ENCODE measurements at regions of chr1 and their contacts with region 1.

Region 1: GRCh38 chr1:109532365-109533136 is 7.1 kb upstream of the GPR61 start:
- DNase-seq: peak; percentile 80 to 86 (median 81)
- ATAC-seq: peak; percentile 84 to 94 (median 92)
- H3K4me3 ChIP-seq: no peak overlapping the region
- H3K27ac ChIP-seq: no peak overlapping the region
- H3K4me1 ChIP-seq: peaks cover 0 to 8% (median 0%) of the 10 kb centered on the region in 4 donors
- H3K27me3 ChIP-seq: no peaks in the 10 kb centered on the region
- CTCF ChIP-seq: peak; percentile 86 to 97 (median 90)
- POLR2A ChIP-seq: no peak

Region 2: DNA sequence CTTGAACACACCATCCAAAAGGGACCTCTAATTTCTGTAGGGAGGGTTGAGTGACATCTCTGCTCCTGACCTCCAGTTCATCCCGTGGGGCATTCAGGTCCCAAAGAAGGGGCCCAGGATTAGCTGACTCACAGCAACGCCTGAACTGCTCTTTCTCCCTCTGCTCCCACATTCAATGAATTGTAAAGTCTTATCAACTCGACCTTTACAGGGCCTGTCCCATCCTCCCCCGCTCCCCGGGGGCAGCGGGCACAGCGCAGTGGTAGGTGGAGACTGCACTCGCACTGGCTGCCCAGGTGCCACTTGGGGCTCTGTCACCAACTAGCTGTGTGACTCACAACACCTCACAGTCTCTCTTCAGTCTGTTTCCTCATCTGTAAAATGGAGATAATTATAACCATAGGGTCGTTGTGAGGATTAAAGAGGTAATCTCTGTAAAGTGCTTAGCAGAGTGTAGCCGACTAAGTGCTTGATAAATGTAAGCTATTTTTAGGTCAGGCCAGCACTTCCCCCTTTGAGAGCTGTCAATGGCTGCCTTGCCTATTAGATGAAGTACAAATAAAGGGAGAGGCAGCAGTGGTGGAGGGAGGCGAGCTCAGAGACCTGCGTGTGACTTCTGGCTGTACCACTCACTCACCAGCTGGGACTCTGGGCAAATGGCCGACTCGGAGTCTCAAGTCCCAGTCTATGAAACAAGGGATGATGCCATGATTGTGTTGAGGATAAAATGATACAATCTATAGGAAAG is 225.1 kb before region 1 on chr1:
- intact Hi-C with region 1: no loop called
- DNase-seq: no peak
- ATAC-seq: no peak
- H3K4me3 ChIP-seq: no peak overlapping the region
- H3K27ac ChIP-seq: no peak overlapping the region
- H3K4me1 ChIP-seq: peaks cover 0 to 11% (median 4%) of the 10 kb centered on the region in 4 donors
- H3K27me3 ChIP-seq: no peaks in the 10 kb centered on the region
- CTCF ChIP-seq: no peak
- POLR2A ChIP-seq: no peak

Region 3: DNA sequence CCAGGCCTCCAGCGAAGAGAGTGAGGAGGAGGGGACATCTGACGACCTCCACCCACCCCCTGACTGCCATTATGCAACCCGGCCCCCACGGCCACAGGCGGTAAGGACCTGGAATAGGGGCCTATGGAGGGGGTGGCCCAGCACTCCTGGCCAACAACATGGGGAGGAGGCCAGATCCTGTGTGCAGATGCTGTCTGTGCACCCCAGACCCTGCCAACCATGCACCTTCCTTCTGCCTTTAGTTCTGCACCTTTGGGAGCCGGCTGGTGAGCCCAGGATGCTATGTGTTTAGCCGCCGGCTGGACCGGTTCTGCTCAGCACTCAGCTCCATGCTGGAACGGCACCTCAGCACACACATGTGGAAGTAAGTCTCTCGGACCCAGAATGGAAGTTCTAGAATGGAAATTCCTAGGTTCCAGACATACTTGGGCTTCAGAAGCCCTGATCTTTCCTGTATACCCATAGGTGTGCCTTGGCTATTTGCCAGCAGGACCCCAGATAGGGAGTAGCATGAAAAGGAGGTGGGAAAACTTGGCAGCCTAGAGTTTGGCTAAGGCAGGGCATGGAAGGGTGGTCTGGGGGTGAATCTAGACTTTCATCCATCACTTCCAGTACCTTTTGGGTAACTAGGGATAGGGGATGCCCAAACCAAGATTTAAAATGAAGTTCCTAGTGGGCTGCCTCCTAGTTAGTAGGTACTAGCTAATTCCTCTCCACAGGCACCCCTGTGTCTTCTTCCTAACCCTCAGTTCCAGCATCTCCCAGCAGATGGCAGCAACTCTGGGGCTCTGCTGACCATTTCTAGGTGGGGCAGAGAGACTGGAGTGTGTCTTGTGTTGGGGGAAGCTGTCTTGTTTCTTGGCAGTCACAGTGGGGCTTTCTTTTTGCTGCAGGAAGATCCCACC is 42.3 kb before region 1 on chr1:
- intact Hi-C with region 1: loop called (anchors 2 to 5 kb)
- DNase-seq: peak in 2 of 3 donors; percentile 63 to 69
- ATAC-seq: peak; percentile 59 to 63 (median 60)
- H3K4me3 ChIP-seq: no peak overlapping the region
- H3K27ac ChIP-seq: no peak overlapping the region
- H3K4me1 ChIP-seq: peaks cover 0 to 9% (median 2%) of the 10 kb centered on the region in 4 donors
- H3K27me3 ChIP-seq: no peaks in the 10 kb centered on the region
- CTCF ChIP-seq: peak; percentile 71 to 86 (median 80)
- POLR2A ChIP-seq: no peak

Region 4: GRCh38 chr1:109499661-109500536 is 32.7 kb before region 1 on chr1:
- intact Hi-C with region 1: loop called in 1 of 2 experiments (anchors 5 kb)
- DNase-seq: peak in 1 of 3 donors; percentile 53
- ATAC-seq: peak; percentile 60 to 70 (median 61)
- H3K4me3 ChIP-seq: no peak overlapping the region
- H3K27ac ChIP-seq: no peak overlapping the region
- H3K4me1 ChIP-seq: peaks cover 0 to 2% (median under 1%) of the 10 kb centered on the region in 4 donors
- H3K27me3 ChIP-seq: no peaks in the 10 kb centered on the region
- CTCF ChIP-seq: peak; percentile 29 to 48 (median 40)
- POLR2A ChIP-seq: no peak

Region 5: DNA sequence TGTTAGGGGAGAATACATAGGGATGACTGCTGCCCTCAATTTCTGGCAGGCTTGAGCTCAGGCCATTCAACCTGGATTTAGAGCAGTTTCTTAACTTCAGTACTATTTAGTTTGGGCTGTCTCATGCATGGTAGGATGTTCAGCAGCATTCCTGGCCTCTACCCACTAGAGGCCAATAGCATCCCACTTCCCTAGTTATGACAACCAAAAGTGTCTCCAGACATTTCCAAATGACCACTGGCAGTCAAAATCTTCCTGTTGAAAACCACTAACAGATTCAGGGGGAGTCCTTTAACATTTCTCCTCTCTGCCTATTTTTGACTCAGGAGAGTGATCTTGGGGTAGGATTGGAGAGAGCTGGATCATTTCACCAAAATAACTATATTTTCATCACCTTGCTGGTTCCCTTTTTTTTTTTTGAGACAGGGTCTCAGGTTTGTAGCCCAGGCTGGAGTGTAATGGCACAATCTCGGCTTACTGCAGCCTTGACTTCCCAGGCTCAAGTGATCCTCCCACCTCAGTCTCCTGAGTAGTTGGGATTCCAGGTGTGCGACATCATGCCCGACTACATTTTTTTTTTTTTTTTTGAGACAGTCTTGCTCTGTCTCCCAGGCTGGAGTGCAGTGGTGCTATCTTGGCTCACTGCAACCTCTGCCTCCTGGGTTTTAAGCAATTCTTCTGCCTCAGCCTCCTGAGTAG is 78.2 kb after region 1 on chr1:
- intact Hi-C with region 1: no loop called
- DNase-seq: no peak
- ATAC-seq: no peak
- H3K4me3 ChIP-seq: no peak overlapping the region
- H3K27ac ChIP-seq: no peak overlapping the region
- H3K4me1 ChIP-seq: peaks cover 0 to 4% (median 0%) of the 10 kb centered on the region in 4 donors
- H3K27me3 ChIP-seq: no peaks in the 10 kb centered on the region
- CTCF ChIP-seq: no peak
- POLR2A ChIP-seq: no peak